ENCODE measurements at regions of chr7 and their contacts with region 1.

Region 1: GRCh38 chr7:92043637-92044036 is 90.6 kb downstream of the CYP51A1 start:
- DNase-seq: no peak
- ATAC-seq: no peak
- H3K4me3 ChIP-seq: no peak overlapping the region
- H3K27ac ChIP-seq: peak overlapping the region; percentile 4
- H3K4me1 ChIP-seq: peaks cover 26% of the 10 kb centered on the region
- H3K27me3 ChIP-seq: no peaks in the 10 kb centered on the region
- CTCF ChIP-seq: no peak
- EP300 ChIP-seq: no peak
- POLR2A ChIP-seq: no peak
- RAD21 ChIP-seq: no peak

Region 2: DNA sequence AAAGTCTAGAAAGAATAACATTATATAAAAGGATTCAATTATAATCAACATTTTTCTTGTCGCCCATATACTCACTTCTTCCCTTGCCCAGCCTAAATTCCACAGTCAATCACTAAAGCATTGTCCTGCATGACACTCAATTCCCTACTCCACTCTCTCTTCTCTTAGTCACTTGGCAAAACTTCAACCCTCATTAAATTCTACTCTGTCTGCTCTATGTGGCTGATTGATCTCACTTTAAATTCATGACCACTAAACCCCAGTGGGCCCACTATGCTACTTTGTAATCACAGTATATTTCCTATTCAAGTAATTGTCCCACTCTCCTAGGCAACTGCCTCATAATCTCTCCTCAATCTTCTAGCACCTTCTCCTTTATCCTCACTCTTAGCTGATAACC is 217.3 kb before region 1 on chr7:
- CTCF ChIA-PET with region 1: no interaction called
- POLR2A ChIA-PET with region 1: no interaction called
- in situ Hi-C with region 1: no loop called
- intact Hi-C with region 1: loop called (anchors 1 kb)
- DNase-seq: no peak
- ATAC-seq: no peak
- H3K4me3 ChIP-seq: no peak overlapping the region
- H3K27ac ChIP-seq: no peak overlapping the region
- H3K4me1 ChIP-seq: no peaks in the 10 kb centered on the region
- H3K27me3 ChIP-seq: no peaks in the 10 kb centered on the region
- CTCF ChIP-seq: no peak
- EP300 ChIP-seq: no peak
- POLR2A ChIP-seq: no peak
- RAD21 ChIP-seq: no peak

Region 3: GRCh38 chr7:91940572-91941341 is 102.9 kb before region 1 on chr7 and contains the start of gene AKAP9:
- CTCF ChIA-PET with region 1: no interaction called
- POLR2A ChIA-PET with region 1: interaction called, 11 read pairs
- in situ Hi-C with region 1: no loop called
- intact Hi-C with region 1: loop called (anchors 5 kb)
- DNase-seq: peak; percentile 77
- ATAC-seq: peak; percentile 97
- H3K4me3 ChIP-seq: peak within 1 kb of the TSS; percentile 85 to 98 (median 91)
- H3K27ac ChIP-seq: peak within 1 kb of the TSS; percentile 91
- H3K4me1 ChIP-seq: peaks cover 36% of the 10 kb centered on the region
- H3K27me3 ChIP-seq: no peaks in the 10 kb centered on the region; a peak in 1 of 5 replicates
- CTCF ChIP-seq: peak; percentile 45
- EP300 ChIP-seq: no peak
- POLR2A ChIP-seq: peak; percentile 81 to 88
- RAD21 ChIP-seq: no peak
- total RNA-seq, gene AKAP9: 33.1 TPM in 2 replicates

Region 4: GRCh38 chr7:91953618-91954017 is 90.0 kb before region 1 on chr7:
- CTCF ChIA-PET with region 1: no interaction called
- POLR2A ChIA-PET with region 1: no interaction called
- in situ Hi-C with region 1: no loop called
- intact Hi-C with region 1: loop called (anchors 5 kb)
- DNase-seq: peak; percentile 10
- ATAC-seq: no peak
- H3K4me3 ChIP-seq: no peak overlapping the region
- H3K27ac ChIP-seq: no peak overlapping the region
- H3K4me1 ChIP-seq: peaks cover 10% of the 10 kb centered on the region
- H3K27me3 ChIP-seq: no peaks in the 10 kb centered on the region
- CTCF ChIP-seq: peak; percentile 21; the same call in 1 of the 2 replicates
- EP300 ChIP-seq: no peak
- POLR2A ChIP-seq: no peak
- RAD21 ChIP-seq: no peak

Region 5: DNA sequence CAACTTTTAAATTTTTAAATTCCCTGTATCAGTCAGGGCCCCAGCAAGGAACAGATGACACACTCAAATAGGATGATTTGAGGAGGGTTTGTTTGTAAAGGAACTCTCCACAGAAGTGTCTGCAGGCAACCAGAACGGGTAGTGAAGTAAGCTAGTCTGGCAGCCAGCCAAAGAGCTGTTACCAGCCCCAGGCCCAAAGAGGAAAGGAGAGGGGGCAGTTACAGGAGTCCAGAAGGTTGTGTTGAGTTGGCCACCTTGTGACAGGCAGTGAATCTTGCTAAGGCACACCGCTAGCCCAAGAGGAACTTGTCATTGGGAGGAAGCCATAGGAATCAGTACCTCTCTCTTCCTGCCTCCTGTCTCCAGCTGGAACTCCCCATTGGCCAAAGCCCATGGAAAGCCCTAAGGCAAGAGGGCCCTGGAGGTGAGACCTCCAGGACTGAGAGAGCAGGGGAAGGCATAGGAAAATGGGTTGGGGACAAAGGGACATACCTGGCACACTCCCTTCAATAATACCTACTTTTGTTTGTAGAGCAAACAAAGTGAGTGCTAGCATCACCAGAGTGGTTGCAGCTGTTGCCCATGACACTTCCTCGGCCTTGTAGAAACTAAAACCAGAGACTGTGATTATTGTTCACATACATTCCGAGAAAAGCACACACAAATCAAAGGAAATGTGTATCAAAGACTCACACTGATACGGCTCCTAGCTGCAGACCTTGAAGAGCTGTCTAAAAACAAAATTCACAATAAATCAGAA is 378.2 kb after region 1 on chr7:
- CTCF ChIA-PET with region 1: no interaction called
- POLR2A ChIA-PET with region 1: no interaction called
- in situ Hi-C with region 1: no loop called
- intact Hi-C with region 1: loop called (anchors 5 kb)
- DNase-seq: no peak
- ATAC-seq: no peak
- H3K4me3 ChIP-seq: no peak overlapping the region
- H3K27ac ChIP-seq: no peak overlapping the region
- H3K4me1 ChIP-seq: peaks cover 21% of the 10 kb centered on the region
- H3K27me3 ChIP-seq: no peaks in the 10 kb centered on the region
- CTCF ChIP-seq: no peak
- EP300 ChIP-seq: no peak
- POLR2A ChIP-seq: no peak
- RAD21 ChIP-seq: no peak

Measured in HepG2 (cell line).